GM10248 (cell line): ENCODE measurements at regions of chr11 and their contacts with region 1.

Region 1: GRCh38 chr11:119121008-119121810 is at the start of gene HINFP:
- DNase-seq: peak; percentile 99
- CTCF ChIP-seq: no peak

Region 2: DNA sequence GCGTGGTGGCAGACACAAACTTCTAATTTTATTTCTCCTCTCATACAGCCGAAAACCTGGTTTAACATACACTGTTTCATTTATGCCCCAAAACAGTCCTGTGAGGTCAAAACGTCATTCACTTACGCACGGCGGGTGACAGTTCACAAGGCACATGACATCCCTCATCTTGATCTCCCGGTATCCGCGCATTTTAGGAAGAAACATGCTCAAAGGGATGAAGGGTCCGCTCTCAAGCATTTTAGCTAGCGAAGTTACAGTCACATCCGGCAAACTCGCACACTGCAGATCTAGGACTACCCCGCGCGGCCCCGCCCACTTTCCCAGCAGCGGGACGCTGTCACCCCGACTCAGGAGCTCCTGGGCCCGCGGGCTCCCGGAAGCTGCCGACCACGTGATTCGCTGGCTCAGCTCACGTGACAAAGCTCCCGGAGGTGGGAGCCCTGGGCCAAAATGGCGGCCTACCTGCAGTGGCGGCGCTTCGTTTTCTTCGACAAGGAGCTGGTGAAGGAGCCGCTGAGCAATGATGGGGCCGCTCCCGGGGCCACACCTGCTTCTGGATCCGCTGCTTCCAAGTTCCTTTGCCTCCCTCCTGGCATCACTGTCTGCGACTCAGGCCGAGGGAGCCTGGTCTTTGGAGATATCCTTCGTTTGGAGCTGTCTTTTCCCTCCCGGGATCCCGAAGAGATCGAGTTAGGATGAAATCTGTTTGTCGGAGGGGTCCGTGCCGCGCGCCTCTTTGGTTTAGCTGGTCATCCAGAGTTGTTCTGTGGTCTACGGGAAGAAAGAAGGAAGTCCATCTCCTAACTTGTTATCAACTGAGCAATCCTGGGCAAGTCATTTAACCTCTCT is 53.6 kb before region 1 on chr11 and contains the start of gene VPS11:
- CTCF ChIA-PET with region 1: no interaction called
- POLR2A ChIA-PET with region 1: no interaction called
- DNase-seq: peak; percentile 99
- CTCF ChIP-seq: no peak

Region 3: DNA sequence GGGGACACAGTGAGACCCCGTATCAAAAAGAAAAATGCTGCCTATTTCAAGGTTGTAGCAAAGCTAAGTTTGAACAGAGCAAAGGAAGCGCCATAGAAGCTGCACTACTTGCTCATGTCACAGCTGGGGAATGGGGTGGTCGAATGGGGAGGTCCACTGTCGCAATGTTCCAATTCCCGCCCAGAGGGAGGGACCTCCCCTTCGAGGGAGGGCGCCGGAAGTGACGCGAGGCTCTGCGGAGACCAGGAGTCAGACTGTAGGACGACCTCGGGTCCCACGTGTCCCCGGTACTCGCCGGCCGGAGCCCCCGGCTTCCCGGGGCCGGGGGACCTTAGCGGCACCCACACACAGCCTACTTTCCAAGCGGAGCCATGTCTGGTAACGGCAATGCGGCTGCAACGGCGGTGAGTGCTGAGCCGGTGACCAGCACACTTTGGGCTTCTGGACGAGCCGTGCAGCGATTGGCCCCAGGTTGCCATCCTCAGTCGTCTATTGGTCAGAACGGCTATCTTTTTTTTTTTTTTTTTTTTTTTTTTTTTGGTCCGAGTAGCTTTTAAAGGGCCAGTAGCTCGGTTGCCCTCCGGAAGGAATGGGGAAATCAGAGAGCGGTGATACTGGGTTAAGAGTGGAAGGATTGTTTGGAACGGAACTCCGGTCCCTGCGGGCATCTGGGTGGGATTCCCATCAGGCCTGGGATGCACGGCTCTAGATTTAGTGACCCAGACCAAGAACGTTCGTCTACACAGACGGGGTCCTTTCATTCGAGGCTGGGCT is 36.4 kb before region 1 on chr11 and contains the start of gene HMBS:
- CTCF ChIA-PET with region 1: no interaction called
- POLR2A ChIA-PET with region 1: interaction called, 12 read pairs
- DNase-seq: peak; percentile 92
- CTCF ChIP-seq: no peak

Region 4: GRCh38 chr11:119095066-119095880 is 25.9 kb before region 1 on chr11:
- CTCF ChIA-PET with region 1: interaction called, 3 read pairs
- POLR2A ChIA-PET with region 1: interaction called, 10 read pairs
- DNase-seq: peak; percentile 98
- CTCF ChIP-seq: no peak

Region 5: DNA sequence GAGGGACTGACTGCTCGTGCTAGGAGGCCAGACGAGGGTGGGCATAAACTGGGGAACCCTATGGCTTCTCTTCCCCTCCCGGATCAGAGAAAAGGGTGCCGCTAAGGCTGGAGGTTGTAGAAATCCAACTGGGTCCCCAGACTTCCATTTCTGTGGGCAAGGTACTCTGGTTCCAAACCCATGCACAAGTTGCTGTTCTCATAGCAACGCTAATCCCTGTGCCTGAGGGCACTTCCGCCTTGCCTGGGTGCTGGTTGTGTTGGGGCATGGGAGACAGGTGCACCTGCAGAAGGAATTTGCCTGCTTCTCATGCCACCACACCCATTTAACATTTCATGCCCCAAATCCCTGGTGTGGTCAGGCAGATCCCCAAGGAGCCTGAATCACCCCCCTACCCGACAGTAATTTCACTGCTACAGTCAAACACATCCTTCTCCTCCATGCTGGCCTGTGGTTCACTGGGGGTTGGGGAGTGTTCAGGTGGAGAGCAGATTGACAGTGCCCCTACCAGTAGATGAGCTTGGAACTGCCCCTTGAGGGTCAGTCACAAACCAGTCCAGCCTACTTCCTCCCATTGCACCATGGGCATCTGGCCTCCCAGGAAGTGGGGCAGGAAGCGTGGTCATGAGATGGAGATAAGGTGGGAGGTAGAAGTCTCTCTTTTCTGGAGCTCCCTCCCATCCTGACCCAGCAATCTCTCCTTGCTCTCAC is 12.9 kb before region 1 on chr11:
- CTCF ChIA-PET with region 1: interaction called, 29 read pairs
- POLR2A ChIA-PET with region 1: interaction called, 5 read pairs
- DNase-seq: peak; percentile 51
- CTCF ChIP-seq: no peak

Region 6: GRCh38 chr11:119134389-119134978 is 13.3 kb after region 1 on chr11:
- CTCF ChIA-PET with region 1: interaction called, 10 read pairs
- POLR2A ChIA-PET with region 1: no interaction called
- DNase-seq: no peak
- CTCF ChIP-seq: peak; percentile 13